ENCODE measurements at regions of chr17 and their contacts with region 1.

Region 1: DNA sequence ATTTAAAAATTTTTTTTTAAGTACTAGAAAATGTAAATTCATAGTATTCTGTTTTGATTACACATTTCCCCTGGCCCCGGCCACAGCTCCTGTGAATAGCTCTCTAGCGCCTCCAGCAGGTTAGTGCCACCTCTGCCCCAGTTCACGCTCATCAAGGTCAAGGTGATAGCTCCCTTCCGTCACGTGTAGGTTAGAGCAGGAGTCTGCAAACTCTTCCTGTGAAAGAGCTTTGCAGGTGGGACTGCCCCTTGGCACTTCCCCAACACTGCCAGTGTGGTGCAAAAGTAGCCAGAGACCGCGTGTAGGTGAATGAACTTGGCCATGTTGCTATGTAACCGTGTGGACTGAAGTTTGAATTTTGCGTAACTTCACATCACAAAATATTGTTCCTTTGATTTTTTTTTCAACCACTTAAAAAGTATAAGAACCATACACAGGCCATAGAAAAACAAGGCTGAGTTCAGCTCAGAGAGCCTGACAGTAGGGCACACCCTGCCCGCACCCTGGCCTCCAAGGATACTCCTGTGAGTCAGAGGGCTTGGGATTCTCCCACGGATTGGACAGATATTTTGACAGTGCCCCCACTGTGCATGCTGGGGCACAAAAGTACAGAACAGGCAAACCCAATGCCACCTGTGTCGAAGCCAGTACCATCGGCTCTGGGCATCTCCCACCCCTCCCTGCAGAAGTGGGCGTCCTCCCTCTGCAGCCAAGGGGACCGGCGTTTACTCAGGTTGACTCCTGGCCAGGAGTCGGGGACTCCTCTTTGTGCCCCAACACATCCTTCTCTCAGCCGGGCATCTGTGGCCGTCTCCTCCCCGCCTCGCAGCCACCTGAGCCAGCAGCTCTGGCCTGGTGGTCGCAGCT is 92.0 kb upstream of the CHMP6 start:
- DNase-seq: peak; percentile 88
- ATAC-seq: peak; percentile 79
- H3K4me3 Mint-ChIP-seq: no peak overlapping the region
- H3K27ac Mint-ChIP-seq: peak overlapping the region; percentile 77
- H3K4me1 Mint-ChIP-seq: peaks cover 64% of the 10 kb centered on the region
- H3K27me3 Mint-ChIP-seq: no peaks in the 10 kb centered on the region

Region 2: DNA sequence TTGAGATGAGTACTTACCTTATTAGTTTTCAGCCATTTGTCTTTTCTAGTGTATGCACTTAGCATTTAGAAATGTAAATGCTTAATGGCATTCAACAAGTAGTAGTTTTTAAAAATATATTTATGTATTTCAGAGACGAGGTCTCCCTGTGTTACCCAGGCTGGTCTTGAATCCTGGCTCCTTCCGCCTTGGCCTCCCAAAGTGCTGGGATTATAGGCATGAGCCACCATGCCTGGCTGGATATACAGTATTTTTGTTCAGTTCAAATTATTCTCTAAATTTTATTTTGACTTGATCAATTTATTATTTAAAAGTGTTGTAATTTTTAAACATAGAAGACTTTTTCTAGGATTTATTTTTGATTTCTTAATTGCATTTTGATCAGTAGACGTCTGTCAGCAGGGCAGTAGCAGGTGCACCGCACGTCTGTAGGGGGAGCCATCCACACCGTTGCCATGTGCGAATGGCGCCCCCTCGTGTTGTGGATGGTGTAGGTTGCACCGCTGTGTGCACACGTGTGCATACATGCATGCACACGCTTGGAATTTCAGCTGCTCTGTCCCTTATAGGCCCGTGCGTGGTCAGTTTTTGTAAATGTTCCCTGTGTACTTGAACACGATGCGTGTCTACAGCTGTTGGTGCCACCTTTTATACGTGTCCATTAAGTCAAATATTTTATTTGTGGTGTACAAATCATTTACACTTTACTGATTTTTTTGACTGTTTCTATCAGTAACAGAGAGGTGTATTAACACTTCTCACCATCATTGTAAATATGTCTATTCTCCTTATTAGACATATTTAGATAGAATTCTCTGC is 324.4 kb before region 1 on chr17:
- CTCF ChIA-PET with region 1: interaction called, 14 read pairs
- POLR2A ChIA-PET with region 1: no interaction called
- DNase-seq: peak; percentile 94
- ATAC-seq: peak; percentile 100
- H3K4me3 Mint-ChIP-seq: no peak overlapping the region
- H3K27ac Mint-ChIP-seq: no peak overlapping the region
- H3K4me1 Mint-ChIP-seq: peaks cover 18% of the 10 kb centered on the region
- H3K27me3 Mint-ChIP-seq: no peaks in the 10 kb centered on the region

Region 3: DNA sequence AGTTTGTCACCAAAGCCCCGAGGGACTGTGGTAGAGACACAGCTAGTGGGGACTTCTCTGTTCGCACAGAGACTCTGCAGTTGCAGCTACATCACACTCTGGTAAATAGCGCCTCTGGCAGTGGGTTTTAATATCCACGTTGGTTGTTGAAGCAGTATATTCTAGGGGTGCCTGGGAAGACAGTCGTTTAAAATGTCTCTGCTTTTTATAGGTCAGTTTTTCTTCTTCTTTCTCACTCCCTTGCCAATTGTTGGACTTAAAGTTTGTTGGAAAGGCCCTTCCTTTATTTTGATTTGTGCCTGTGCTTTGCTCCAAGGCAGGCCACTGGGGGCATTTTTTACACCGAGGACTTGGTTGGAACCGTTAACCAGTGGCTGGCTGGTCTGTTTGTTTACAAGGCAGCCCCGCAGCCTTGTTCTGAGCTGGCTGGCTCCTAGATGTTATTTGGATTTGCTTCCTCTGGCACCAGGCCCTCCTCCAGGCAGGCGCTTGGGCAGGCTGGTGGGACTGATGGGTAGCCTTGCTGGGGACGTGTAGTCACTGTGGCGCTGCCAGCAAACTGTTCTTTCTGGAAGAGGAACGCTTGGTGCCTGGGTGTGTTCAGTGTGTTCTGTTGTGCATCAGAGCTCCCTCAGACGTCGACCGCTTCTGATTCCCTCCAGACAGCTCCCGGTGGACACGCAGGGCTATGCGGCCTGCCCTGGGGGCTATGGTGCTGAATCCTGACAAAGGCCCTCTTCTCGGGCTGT is 126.2 kb before region 1 on chr17:
- CTCF ChIA-PET with region 1: interaction called, 16 read pairs
- POLR2A ChIA-PET with region 1: no interaction called
- DNase-seq: no peak
- ATAC-seq: peak; percentile 53
- H3K4me3 Mint-ChIP-seq: no peak overlapping the region
- H3K27ac Mint-ChIP-seq: peak overlapping the region; percentile 94
- H3K4me1 Mint-ChIP-seq: peaks cover 75% of the 10 kb centered on the region
- H3K27me3 Mint-ChIP-seq: no peaks in the 10 kb centered on the region

Region 4: GRCh38 chr17:80847496-80848230 is 52.0 kb before region 1 on chr17:
- CTCF ChIA-PET with region 1: interaction called, 11 read pairs
- POLR2A ChIA-PET with region 1: interaction called, 3 read pairs
- DNase-seq: peak; percentile 90
- ATAC-seq: peak; percentile 91
- H3K4me3 Mint-ChIP-seq: peak overlapping the region; percentile 8
- H3K27ac Mint-ChIP-seq: peak overlapping the region; percentile 97
- H3K4me1 Mint-ChIP-seq: peaks cover 85% of the 10 kb centered on the region
- H3K27me3 Mint-ChIP-seq: no peaks in the 10 kb centered on the region

Region 5: GRCh38 chr17:80866147-80866793 is 33.4 kb before region 1 on chr17:
- CTCF ChIA-PET with region 1: interaction called, 26 read pairs
- POLR2A ChIA-PET with region 1: no interaction called
- DNase-seq: peak; percentile 81
- ATAC-seq: peak; percentile 58
- H3K4me3 Mint-ChIP-seq: no peak overlapping the region
- H3K27ac Mint-ChIP-seq: peak overlapping the region; percentile 78
- H3K4me1 Mint-ChIP-seq: peaks cover 77% of the 10 kb centered on the region
- H3K27me3 Mint-ChIP-seq: no peaks in the 10 kb centered on the region

Region 6: DNA sequence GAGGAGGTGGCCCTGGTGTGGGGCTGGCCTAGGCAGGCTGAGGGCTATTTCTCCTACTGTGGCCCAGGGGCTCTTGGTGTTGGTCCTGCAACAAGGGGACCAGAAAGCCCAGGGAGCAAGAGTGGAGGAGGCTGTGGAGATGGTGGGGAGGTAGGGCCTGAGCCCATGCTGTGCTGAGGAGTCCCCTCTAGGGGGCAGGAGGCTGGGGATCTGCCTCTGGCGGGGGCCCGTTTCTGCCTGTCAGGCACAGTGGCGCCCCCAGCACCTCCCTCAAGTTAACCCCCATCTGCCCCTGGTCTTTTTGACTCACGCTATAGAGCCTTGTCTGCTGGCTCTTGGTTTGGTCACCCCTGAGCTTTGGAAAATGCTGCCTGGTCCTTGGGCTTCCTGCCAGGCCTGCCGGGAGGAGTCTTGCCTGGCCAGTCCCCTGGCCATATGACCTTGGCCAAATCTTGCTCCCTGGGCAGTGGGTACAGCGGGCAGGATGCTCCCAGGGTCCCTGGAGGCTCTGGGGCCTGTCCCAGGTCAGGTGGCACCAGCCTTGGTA is 141.2 kb after region 1 on chr17:
- CTCF ChIA-PET with region 1: no interaction called
- POLR2A ChIA-PET with region 1: no interaction called
- DNase-seq: peak; percentile 56
- ATAC-seq: peak; percentile 38
- H3K4me3 Mint-ChIP-seq: no peak overlapping the region
- H3K27ac Mint-ChIP-seq: no peak overlapping the region
- H3K4me1 Mint-ChIP-seq: peaks cover 4% of the 10 kb centered on the region
- H3K27me3 Mint-ChIP-seq: peaks cover 16% of the 10 kb centered on the region

Measured in activated CD8-positive, alpha-beta T cell treated with anti-CD3 and anti-CD28 coated beads, Interleukin-2, amount 10 ng/mL, durations not matched to agents 7 days and 5 days (primary cell).